ENCODE measurements at regions of chr6 and their contacts with region 1.

Region 1: GRCh38 chr6:44475779-44476434 is 88.4 kb downstream of the CDC5L start:
- DNase-seq: peak; percentile 75
- H3K4me3 ChIP-seq: no peak overlapping the region
- H3K27ac ChIP-seq: no peak overlapping the region
- H3K4me1 ChIP-seq: no peaks in the 10 kb centered on the region
- H3K27me3 ChIP-seq: peaks cover 0 to 6% of the 10 kb centered on the region in 2 experiments
- CTCF ChIP-seq: peak; percentile 90 to 97
- POLR2A ChIP-seq: no peak

Region 2: DNA sequence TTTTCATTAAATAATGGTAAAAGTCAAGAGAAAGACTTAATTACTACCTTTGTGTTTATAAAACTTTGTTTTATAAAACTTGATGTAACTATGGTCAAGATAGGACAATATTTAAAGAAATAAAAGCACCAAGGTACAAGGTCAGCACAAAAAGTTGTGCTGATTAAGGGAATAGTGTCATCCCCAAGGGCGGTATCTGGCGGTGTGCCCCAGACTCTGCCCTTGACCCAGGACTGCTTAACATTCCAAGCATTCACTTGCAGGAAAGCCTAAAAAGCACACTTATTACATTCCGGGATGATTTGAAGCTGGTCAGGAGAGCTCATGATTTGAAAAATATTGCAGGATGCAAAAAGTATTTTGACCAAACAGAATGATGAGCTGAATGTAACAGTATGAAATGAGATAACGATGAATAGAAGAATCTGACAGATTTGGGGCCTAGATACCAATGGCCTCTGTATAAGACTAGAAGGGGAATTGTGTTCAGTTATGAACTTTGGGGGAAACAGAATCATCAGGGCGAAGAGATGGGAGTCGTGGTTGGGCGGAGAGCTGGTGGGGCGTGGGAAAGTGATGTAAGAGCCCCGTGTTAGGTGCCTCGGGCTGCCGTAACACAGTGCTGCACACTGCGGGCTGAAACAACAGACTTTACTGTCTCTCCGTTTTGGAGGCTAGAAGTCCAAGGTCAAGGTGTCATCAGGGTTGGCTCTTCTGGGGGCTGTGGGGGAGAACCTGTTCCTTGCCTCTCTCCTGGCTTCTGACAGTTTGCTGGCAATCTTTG is 11.2 kb before region 1 on chr6:
- CTCF ChIA-PET with region 1: interaction called, 24 read pairs
- POLR2A ChIA-PET with region 1: no interaction called
- dilution Hi-C with region 1: no loop called
- intact Hi-C with region 1: no loop called
- DNase-seq: no peak
- H3K4me3 ChIP-seq: no peak overlapping the region
- H3K27ac ChIP-seq: no peak overlapping the region
- H3K4me1 ChIP-seq: no peaks in the 10 kb centered on the region
- H3K27me3 ChIP-seq: peaks cover 0 to 3% of the 10 kb centered on the region in 2 experiments
- CTCF ChIP-seq: no peak
- POLR2A ChIP-seq: no peak

Region 3: DNA sequence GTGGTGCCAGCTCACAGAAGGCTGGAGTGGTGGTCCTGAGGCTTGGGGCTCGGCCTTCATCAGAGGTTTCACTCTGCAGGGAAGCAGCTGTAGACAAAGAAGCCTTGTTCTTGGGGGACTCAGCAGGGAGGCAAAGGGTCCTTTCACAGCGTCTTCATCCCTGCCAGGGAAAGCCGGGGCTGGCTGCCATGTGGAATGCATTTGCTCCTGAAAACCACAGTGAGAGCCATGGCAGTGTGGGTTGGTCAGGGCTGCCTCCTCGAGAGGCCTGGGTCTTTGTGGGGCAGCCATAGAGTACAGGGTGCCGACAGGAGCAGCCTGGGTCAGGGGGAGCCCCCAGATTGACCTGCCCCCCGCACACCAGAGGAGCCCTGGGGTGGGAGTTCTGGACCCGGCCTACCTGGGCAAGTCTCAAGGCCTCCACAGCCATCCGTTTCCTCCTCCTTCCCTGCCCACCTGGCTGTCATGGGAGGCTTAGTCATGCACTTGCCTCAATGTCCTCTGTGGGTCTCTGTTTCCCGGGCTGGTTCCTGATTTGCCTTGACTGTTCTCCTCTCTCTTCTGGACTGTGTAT is 55.6 kb after region 1 on chr6:
- CTCF ChIA-PET with region 1: interaction called, 16 read pairs
- POLR2A ChIA-PET with region 1: no interaction called
- dilution Hi-C with region 1: no loop called
- intact Hi-C with region 1: no loop called
- DNase-seq: no peak
- H3K4me3 ChIP-seq: no peak overlapping the region
- H3K27ac ChIP-seq: no peak overlapping the region
- H3K4me1 ChIP-seq: no peaks in the 10 kb centered on the region
- H3K27me3 ChIP-seq: no peaks in the 10 kb centered on the region
- CTCF ChIP-seq: no peak
- POLR2A ChIP-seq: no peak

Region 4: DNA sequence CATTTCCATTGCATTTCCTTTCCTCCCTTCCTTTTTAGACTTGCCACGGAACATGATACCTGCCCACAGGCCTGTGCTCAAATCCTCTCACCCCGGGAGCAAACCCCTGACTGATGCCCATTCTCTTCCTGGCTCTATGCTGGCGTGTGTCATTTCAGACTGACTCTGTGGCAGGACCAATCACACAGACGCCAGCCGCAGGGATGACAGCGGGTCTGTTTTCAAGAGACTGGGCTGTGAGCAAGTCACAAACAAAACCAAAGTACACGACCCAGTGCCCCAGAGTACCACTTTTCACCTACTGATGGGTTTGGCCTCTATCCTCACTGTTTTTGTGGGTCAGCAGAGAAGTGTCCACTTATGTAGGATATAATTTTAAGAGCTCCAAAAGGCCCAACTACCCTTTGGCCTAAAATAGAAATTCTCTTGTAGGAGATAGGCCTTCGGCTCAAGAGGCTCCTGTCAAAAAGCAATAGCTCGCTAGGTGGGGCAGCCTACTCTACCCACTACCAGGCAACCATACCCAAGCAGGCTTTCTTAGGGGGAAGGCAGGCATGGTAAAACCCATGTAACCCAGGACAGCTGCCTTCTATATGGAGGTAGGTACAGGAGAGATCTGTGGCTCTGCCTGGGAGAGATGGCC is 127.3 kb after region 1 on chr6:
- CTCF ChIA-PET with region 1: interaction called, 11 read pairs
- POLR2A ChIA-PET with region 1: no interaction called
- dilution Hi-C with region 1: no loop called
- intact Hi-C with region 1: no loop called
- DNase-seq: no peak
- H3K4me3 ChIP-seq: no peak overlapping the region
- H3K27ac ChIP-seq: no peak overlapping the region
- H3K4me1 ChIP-seq: no peaks in the 10 kb centered on the region
- H3K27me3 ChIP-seq: no peaks in the 10 kb centered on the region
- CTCF ChIP-seq: no peak
- POLR2A ChIP-seq: no peak

Region 5: DNA sequence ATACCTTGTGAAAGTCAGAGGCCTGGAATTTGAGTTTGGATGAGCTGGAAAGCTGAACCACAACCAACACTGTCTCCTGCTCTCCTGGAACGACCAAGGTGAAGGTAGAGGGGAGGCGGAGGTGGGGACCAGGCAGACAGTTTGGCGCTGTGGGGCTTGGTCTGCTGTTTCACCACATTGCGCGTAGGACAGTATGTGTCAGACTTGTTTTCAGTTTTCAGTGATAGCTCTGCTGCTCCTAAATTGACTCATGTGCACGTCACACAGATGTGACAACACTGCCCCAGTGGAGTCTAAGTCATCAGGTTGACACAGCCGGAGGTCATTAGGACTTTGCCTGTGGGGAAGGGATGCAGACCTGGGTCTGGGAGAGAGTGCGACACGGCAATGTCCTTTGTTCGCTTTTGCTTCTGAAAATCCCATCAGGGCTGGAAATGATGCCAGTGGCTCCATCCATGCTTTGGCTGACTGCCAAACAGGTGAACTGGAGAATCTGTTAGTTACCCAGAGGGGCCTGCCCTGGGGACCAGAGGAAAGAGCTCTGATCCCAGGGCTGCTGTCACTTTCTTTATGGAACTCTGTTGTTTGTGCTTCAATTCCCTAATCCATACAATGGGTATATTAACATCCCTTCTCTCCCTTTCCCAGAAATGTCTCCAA is 167.1 kb after region 1 on chr6:
- CTCF ChIA-PET with region 1: interaction called, 61 read pairs
- POLR2A ChIA-PET with region 1: no interaction called
- dilution Hi-C with region 1: no loop called
- intact Hi-C with region 1: no loop called
- DNase-seq: no peak
- H3K4me3 ChIP-seq: no peak overlapping the region
- H3K27ac ChIP-seq: no peak overlapping the region
- H3K4me1 ChIP-seq: no peaks in the 10 kb centered on the region
- H3K27me3 ChIP-seq: no peaks in the 10 kb centered on the region
- CTCF ChIP-seq: no peak
- POLR2A ChIP-seq: no peak

Region 6: GRCh38 chr6:45714741-45715507 is 1239.0 kb after region 1 on chr6:
- CTCF ChIA-PET with region 1: interaction called, 47 read pairs
- POLR2A ChIA-PET with region 1: no interaction called
- dilution Hi-C with region 1: no loop called
- intact Hi-C with region 1: loop called (anchors 1 kb)
- DNase-seq: peak; percentile 80
- H3K4me3 ChIP-seq: no peak overlapping the region
- H3K27ac ChIP-seq: no peak overlapping the region
- H3K4me1 ChIP-seq: no peaks in the 10 kb centered on the region
- H3K27me3 ChIP-seq: peaks cover 5 to 11% of the 10 kb centered on the region in 2 experiments
- CTCF ChIP-seq: peak; percentile 74 to 80
- POLR2A ChIP-seq: no peak